Gastrocnemius medialis (tissue), 4 donors: ENCODE measurements at regions of chr19 and their contacts with region 1.

Region 1: DNA sequence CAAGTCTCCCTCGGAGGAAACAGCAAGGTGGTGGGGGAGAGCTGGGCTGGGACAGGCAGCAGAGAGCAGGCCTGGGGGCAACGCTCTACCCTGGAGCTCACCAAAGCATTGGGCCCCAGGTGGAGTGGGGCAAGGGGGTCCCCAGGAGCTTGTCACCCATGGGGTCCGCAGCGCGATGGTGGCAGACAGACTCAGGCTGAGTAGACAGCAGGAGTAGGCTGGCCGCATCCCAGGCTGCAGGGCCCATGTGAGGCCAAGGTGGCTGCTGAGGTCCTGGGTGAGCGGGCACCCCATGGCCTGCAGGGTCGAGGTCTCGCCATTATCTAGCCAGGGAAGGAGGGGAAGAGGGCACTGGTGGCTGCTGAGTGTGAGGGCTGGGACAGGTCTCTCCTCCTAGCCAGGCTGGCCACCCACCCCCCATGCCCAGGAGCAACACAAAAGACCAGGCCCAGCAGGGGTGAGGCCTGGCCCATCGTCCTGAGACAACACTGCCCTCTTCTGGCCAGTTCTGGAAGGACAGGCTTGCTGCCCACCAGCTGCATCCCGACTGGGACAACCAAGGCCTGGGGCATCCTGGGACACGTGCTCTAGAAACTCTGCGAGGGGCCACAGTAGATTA is 33.1 kb downstream of the CEBPG start:
- DNase-seq: peak in 1 of 2 donors; percentile 60
- ATAC-seq: peak; percentile 49 to 80
- H3K4me3 ChIP-seq: no peak overlapping the region
- H3K27ac ChIP-seq: no peak overlapping the region
- H3K4me1 ChIP-seq: peaks cover 0 to 7% of the 10 kb centered on the region in 2 donors
- H3K27me3 ChIP-seq: no peaks in the 10 kb centered on the region
- CTCF ChIP-seq: peak; percentile 91 to 98 (median 97)
- POLR2A ChIP-seq: no peak

Region 2: DNA sequence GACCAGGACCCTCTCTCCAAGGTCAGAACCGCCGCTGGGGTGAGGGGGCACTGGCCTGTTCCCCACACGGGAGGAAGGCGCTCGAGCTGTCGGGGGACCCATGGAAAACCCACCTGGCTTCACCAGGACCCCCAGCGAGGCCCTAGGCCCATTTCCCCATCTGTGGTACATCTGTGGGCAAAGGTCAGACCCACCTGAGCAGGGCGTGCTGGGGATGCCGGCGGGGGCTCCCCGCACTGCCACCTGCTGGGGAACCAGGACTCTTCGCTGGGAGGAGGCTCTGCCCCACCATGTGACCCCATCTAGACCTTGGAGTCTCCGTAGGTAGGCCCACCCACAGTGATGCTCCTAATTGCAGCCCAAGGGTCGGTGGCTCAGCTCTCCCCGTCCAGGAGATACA is 274.2 kb before region 1 on chr19:
- in situ Hi-C with region 1: no loop called
- intact Hi-C with region 1: no loop called
- DNase-seq: no peak
- ATAC-seq: no peak
- H3K4me3 ChIP-seq: no peak overlapping the region
- H3K27ac ChIP-seq: no peak overlapping the region
- H3K4me1 ChIP-seq: no peaks in the 10 kb centered on the region
- H3K27me3 ChIP-seq: peaks cover 12 to 19% (median 18%) of the 10 kb centered on the region in 3 donors
- CTCF ChIP-seq: no peak
- POLR2A ChIP-seq: no peak

Region 3: GRCh38 chr19:33235269-33235995 is 171.2 kb before region 1 on chr19:
- in situ Hi-C with region 1: loop called (anchors 5 kb)
- intact Hi-C with region 1: no loop called
- DNase-seq: peak; percentile 31 to 63
- ATAC-seq: peak in 1 of 2 donors; percentile 77
- H3K4me3 ChIP-seq: no peak overlapping the region
- H3K27ac ChIP-seq: no peak overlapping the region
- H3K4me1 ChIP-seq: no peaks in the 10 kb centered on the region
- H3K27me3 ChIP-seq: no peaks in the 10 kb centered on the region
- CTCF ChIP-seq: peak; percentile 67 to 90 (median 86)
- POLR2A ChIP-seq: no peak

Region 4: GRCh38 chr19:33241530-33242101 is 165.0 kb before region 1 on chr19:
- in situ Hi-C with region 1: loop called in 3 of 4 experiments (anchors 5 kb)
- intact Hi-C with region 1: loop called (anchors 1 kb)
- DNase-seq: no peak
- ATAC-seq: peak in 1 of 2 donors; percentile 33
- H3K4me3 ChIP-seq: no peak overlapping the region
- H3K27ac ChIP-seq: no peak overlapping the region
- H3K4me1 ChIP-seq: no peaks in the 10 kb centered on the region
- H3K27me3 ChIP-seq: no peaks in the 10 kb centered on the region
- CTCF ChIP-seq: peak; percentile 81 to 91 (median 84)
- POLR2A ChIP-seq: no peak

Region 5: DNA sequence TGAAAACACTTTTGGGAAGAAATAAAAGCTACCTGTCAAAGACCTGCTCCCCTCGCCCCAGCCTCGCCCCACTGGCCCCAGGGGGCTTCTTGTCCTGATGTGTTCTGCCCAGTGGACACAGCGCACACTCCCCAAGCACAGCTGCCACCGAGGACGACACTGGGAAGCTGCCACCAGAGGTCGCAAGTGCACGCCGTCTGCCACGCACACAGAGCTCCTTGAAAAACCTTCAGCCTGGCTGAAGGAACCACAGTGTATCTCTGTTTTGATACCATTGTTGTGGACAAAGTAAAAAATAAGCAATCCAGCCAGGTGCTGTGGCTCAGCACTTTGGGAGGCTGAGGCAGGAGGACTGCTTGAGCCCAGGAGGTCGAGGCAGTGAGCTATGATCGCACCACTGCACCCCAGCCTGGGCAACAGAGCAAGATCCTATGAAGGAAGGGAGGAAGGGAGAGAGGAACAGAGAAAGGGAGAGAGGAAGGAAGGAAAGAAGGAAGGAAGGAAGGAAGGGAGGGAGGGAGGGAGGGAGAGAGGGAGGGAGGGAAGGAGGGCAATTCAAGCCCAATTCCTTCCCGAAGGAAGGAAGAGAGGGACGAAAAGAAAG is 24.1 kb after region 1 on chr19:
- in situ Hi-C with region 1: no loop called
- intact Hi-C with region 1: no loop called
- DNase-seq: no peak
- ATAC-seq: peak in 1 of 2 donors; percentile 51
- H3K4me3 ChIP-seq: no peak overlapping the region
- H3K27ac ChIP-seq: no peak overlapping the region
- H3K4me1 ChIP-seq: no peaks in the 10 kb centered on the region
- H3K27me3 ChIP-seq: no peaks in the 10 kb centered on the region
- CTCF ChIP-seq: peak; percentile 38 to 76 (median 60)
- POLR2A ChIP-seq: no peak

Region 6: GRCh38 chr19:34232566-34233481 is 826.2 kb after region 1 on chr19:
- in situ Hi-C with region 1: no loop called
- intact Hi-C with region 1: no loop called
- DNase-seq: no peak
- ATAC-seq: peak; percentile 64 to 88
- H3K4me3 ChIP-seq: no peak overlapping the region
- H3K27ac ChIP-seq: peak overlapping the region; percentile 23 to 61 (median 55)
- H3K4me1 ChIP-seq: peaks cover 0 to 10% of the 10 kb centered on the region in 2 donors
- H3K27me3 ChIP-seq: no peaks in the 10 kb centered on the region
- CTCF ChIP-seq: no peak
- POLR2A ChIP-seq: no peak